ENCODE measurements at regions of chr2 and their contacts with region 1.

Region 1: GRCh38 chr2:159712143-159712928 is at the start of gene MARCHF7:
- DNase-seq: peak; percentile 99
- H3K4me3 Mint-ChIP-seq: peak within 1 kb of the TSS; percentile 100
- H3K27ac Mint-ChIP-seq: peak within 1 kb of the TSS; percentile 100
- H3K4me1 Mint-ChIP-seq: peaks cover 32% of the 10 kb centered on the region
- H3K27me3 Mint-ChIP-seq: no peaks in the 10 kb centered on the region
- total RNA-seq, gene MARCHF7: 67.1 and 72.0 TPM in 2 replicates

Region 2: GRCh38 chr2:159286709-159287441 is 425.5 kb before region 1 on chr2:
- intact Hi-C with region 1: loop called (anchors 1 kb)
- DNase-seq: peak; percentile 99
- H3K4me3 Mint-ChIP-seq: peak overlapping the region; percentile 87
- H3K27ac Mint-ChIP-seq: peak overlapping the region; percentile 85
- H3K4me1 Mint-ChIP-seq: peaks cover 18% of the 10 kb centered on the region
- H3K27me3 Mint-ChIP-seq: no peaks in the 10 kb centered on the region

Region 3: GRCh38 chr2:159615140-159615951 is 97.0 kb before region 1 on chr2:
- intact Hi-C with region 1: loop called (anchors 2 kb)
- DNase-seq: peak; percentile 79
- H3K4me3 Mint-ChIP-seq: peak overlapping the region; percentile 80
- H3K27ac Mint-ChIP-seq: peak overlapping the region; percentile 70
- H3K4me1 Mint-ChIP-seq: peaks cover 11% of the 10 kb centered on the region
- H3K27me3 Mint-ChIP-seq: peaks cover 35% of the 10 kb centered on the region

Region 4: GRCh38 chr2:159744363-159744762 is 32.0 kb after region 1 on chr2:
- intact Hi-C with region 1: no loop called
- DNase-seq: no peak
- H3K4me3 Mint-ChIP-seq: no peak overlapping the region
- H3K27ac Mint-ChIP-seq: peak overlapping the region; percentile 6
- H3K4me1 Mint-ChIP-seq: peaks cover 8% of the 10 kb centered on the region
- H3K27me3 Mint-ChIP-seq: no peaks in the 10 kb centered on the region

Region 5: DNA sequence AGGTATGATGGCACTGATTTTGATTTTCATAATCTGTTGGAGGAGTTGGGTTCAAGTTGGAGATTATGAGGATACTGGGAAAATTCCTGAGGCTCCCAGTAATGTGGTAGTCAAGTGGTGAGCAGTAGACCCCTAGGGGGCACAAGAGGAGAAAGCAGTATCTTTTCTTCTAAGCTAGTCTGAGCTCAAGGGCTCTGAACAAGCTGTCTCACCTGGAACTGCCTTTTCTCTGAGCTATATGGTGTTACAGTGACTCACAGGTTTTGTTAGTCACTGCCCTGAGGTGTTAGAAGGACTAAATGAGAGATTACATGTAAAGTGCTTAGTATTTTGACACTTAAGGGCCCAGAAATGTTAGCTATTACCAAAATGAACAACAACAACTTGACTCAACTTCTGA is 43.5 kb after region 1 on chr2:
- intact Hi-C with region 1: loop called (anchors 5 kb)
- DNase-seq: no peak
- H3K4me3 Mint-ChIP-seq: no peak overlapping the region
- H3K27ac Mint-ChIP-seq: no peak overlapping the region
- H3K4me1 Mint-ChIP-seq: peaks cover 14% of the 10 kb centered on the region
- H3K27me3 Mint-ChIP-seq: no peaks in the 10 kb centered on the region

Region 6: GRCh38 chr2:159904127-159904958 is 192.0 kb after region 1 on chr2:
- intact Hi-C with region 1: loop called (anchors 1 kb)
- DNase-seq: peak; percentile 93
- H3K4me3 Mint-ChIP-seq: peak within 1 kb of the TSS; percentile 98
- H3K27ac Mint-ChIP-seq: peak within 1 kb of the TSS; percentile 94
- H3K4me1 Mint-ChIP-seq: peaks cover 36% of the 10 kb centered on the region
- H3K27me3 Mint-ChIP-seq: no peaks in the 10 kb centered on the region